Mammary epithelial cell (primary cell): ENCODE measurements at regions of chr13 and their contacts with region 1.

Region 1: DNA sequence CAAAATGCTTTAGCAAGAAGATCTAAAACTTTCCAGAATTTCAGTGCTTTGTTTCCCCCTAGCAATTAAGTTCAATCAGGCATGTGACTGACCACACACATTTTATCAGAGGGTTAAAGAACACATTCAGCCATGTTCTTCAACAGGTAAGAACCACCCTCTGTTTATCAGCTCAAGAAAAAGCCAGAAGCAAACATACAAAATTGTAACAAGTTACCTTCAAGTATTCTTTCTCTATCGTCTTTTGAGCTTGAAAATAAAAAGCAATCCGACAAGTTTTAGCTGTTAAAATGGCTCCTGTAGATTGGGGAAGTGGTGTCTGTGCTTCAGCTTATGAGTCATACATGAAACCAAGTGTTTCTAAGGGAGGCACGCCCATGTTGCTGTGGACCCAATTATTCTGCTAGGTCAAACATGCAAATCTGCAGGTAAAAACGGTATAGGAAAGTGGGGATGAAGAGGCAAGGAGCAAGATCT is at the start of gene ELF1:
- DNase-seq: peak; percentile 90
- H3K4me3 ChIP-seq: peak within 1 kb of the TSS; percentile 58 to 73 (median 72)
- H3K27ac ChIP-seq: peak within 1 kb of the TSS; percentile 100
- H3K4me1 ChIP-seq: peaks cover 12% of the 10 kb centered on the region
- H3K27me3 ChIP-seq: no peaks in the 10 kb centered on the region
- CTCF ChIP-seq: no peak
- total RNA-seq, gene ELF1: 48.0 to 66.3 TPM

Region 2: GRCh38 chr13:40564342-40565001 is 454.6 kb before region 1 on chr13:
- CTCF ChIA-PET with region 1: no interaction called
- dilution Hi-C with region 1: no loop called
- in situ Hi-C with region 1: no loop called
- intact Hi-C with region 1: no loop called
- DNase-seq: no peak
- H3K4me3 ChIP-seq: no peak overlapping the region
- H3K27ac ChIP-seq: no peak overlapping the region
- H3K4me1 ChIP-seq: no peaks in the 10 kb centered on the region
- H3K27me3 ChIP-seq: no peaks in the 10 kb centered on the region
- CTCF ChIP-seq: peak in 1 of 2 donors; percentile 12

Region 3: DNA sequence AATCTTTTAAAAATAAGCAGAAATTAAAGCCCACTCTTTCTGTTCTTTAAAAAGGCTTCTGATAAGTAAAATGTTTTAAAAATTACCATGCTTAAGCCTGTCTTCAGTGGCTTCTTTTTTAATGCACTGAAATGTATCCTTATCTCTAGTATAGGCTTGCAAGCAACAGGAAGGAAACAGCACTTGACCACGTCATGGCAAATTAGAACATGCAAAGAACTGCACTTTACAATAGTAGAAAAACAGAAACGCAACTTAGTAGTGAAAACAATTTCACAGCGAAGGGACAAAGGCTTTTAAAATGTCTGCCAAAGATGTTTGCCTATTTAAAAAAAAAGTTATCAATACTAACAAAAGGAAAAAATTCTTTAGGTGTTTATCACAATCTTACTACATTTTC is 36.3 kb before region 1 on chr13:
- CTCF ChIA-PET with region 1: no interaction called
- dilution Hi-C with region 1: no loop called
- in situ Hi-C with region 1: no loop called
- intact Hi-C with region 1: no loop called
- DNase-seq: peak; percentile 37
- H3K4me3 ChIP-seq: peak overlapping the region in 1 of 3 experiments; percentile 17
- H3K27ac ChIP-seq: peak overlapping the region; percentile 61
- H3K4me1 ChIP-seq: peaks cover 21% of the 10 kb centered on the region
- H3K27me3 ChIP-seq: no peaks in the 10 kb centered on the region
- CTCF ChIP-seq: no peak

Region 4: DNA sequence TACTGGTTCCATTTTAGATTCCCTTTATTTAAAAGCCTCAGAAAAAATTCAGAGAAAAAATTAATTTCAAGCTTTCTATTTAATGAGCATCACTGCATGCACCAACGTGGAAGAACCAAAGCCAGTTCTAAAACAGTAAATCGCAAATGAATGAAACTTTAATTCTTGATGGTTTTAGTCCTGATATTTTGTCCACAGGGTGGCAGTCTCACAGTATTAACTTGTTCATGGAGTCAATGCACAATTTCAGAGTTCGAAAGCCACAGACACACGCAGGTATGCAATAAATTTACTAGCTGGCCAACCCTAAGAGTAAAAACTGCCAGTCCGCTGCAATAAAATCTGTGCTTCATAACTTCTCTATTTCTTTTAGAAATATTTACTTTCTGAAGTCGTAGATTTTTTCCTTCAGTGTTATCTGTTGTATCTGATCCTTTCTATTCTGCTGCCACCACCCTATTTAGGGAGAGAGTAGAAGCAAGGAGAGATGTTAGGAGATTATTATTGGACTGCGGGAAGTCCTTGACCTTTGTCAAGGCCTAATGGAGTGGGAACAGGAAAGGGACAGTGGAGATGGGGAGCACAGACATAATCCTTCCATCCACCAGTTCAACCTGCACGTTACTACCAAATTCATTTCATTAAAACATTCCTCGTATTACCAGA is 35.3 kb after region 1 on chr13:
- CTCF ChIA-PET with region 1: no interaction called
- dilution Hi-C with region 1: no loop called
- in situ Hi-C with region 1: no loop called
- intact Hi-C with region 1: loop called (anchors 5 kb)
- DNase-seq: peak; percentile 48
- H3K4me3 ChIP-seq: no peak overlapping the region
- H3K27ac ChIP-seq: no peak overlapping the region
- H3K4me1 ChIP-seq: peaks cover 15% of the 10 kb centered on the region
- H3K27me3 ChIP-seq: no peaks in the 10 kb centered on the region
- CTCF ChIP-seq: peak; percentile 54 to 61